Activated B cell treated with CpG ODN at 0.5 μM for 24 hours (primary cell): ENCODE measurements at regions of chr2 and their contacts with region 1.

Region 1: DNA sequence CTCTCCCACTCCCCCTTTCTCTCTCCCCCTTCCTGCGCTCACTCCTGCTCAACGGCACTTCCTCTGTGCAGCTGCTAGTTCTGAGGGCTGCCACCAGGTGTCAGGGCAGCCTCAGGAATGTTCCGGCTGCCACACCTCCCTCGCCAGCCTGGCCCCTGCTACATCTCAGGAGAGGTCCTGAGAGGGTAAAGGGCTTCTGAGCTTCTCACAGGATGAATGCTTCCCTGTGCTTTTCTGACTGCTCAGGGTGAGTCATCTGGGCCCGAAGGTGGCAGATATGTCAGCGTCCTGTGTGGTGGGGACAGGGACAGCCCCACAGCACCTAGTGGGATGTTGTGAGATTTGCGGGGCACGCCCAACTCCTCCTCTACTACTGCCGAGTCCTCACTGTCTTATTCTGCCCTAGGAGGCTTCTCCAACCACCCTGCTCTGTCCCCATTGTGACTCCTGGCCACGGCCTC is 49.0 kb downstream of the PLEKHB2 start:
- DNase-seq: peak; percentile 49
- ATAC-seq: peak; percentile 91
- H3K4me3 Mint-ChIP-seq: no peak overlapping the region
- H3K27ac Mint-ChIP-seq: no peak overlapping the region
- H3K4me1 Mint-ChIP-seq: peaks cover 21% of the 10 kb centered on the region
- H3K27me3 Mint-ChIP-seq: no peaks in the 10 kb centered on the region
- CTCF ChIP-seq: no peak

Region 2: GRCh38 chr2:131413148-131413747 is 259.1 kb after region 1 on chr2:
- CTCF ChIA-PET with region 1: no interaction called
- POLR2A ChIA-PET with region 1: no interaction called
- intact Hi-C with region 1: loop called (anchors 2 kb)
- DNase-seq: no peak
- ATAC-seq: peak; percentile 65
- H3K4me3 Mint-ChIP-seq: no peak overlapping the region
- H3K27ac Mint-ChIP-seq: no peak overlapping the region
- H3K4me1 Mint-ChIP-seq: no peaks in the 10 kb centered on the region
- H3K27me3 Mint-ChIP-seq: peaks cover 36% of the 10 kb centered on the region
- CTCF ChIP-seq: peak; percentile 57

Region 3: DNA sequence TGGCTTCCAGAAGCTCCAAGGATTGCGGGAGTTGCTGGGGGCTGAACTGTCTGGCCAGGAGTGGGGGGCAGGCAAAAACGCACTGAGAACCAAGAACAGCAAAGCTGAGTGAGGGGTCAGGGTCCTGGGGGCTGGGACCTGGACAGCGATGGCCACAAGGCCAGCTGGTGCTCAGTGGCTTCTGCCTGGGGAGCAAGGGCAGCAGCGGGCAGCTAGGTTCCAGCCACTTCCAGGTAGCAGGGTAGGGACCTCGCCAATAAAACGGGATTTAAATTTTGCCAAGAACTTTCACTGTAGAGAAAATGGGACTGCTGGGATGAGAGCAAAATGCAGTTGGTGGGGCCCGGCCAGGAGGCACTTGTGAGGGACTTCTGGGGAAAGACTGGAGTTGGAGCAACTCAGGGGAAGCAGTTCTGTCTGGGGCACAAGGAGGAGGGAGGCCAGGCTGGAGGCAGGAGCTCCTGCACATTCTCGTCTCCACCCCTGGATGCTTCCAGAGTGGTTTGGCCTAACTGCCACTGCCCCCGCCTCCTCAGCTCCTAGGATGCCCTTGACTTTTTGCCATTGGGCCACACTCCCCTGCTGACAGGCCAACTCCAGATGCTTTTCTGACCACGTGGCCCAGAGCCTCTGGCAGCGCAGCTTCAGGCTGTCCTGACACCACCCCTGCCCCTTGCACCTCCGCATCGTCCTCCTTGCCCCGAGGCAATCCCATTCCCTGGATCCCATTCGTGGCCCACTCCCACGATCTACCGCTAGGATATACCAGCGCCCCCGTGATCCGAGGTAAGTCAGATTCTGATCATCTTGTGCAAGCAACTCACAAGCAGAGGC is 368.1 kb after region 1 on chr2:
- CTCF ChIA-PET with region 1: no interaction called
- POLR2A ChIA-PET with region 1: no interaction called
- intact Hi-C with region 1: loop called (anchors 5 kb)
- DNase-seq: no peak
- ATAC-seq: no peak
- H3K4me3 Mint-ChIP-seq: no peak overlapping the region
- H3K27ac Mint-ChIP-seq: no peak overlapping the region
- H3K4me1 Mint-ChIP-seq: no peaks in the 10 kb centered on the region
- H3K27me3 Mint-ChIP-seq: no peaks in the 10 kb centered on the region
- CTCF ChIP-seq: no peak

Region 4: DNA sequence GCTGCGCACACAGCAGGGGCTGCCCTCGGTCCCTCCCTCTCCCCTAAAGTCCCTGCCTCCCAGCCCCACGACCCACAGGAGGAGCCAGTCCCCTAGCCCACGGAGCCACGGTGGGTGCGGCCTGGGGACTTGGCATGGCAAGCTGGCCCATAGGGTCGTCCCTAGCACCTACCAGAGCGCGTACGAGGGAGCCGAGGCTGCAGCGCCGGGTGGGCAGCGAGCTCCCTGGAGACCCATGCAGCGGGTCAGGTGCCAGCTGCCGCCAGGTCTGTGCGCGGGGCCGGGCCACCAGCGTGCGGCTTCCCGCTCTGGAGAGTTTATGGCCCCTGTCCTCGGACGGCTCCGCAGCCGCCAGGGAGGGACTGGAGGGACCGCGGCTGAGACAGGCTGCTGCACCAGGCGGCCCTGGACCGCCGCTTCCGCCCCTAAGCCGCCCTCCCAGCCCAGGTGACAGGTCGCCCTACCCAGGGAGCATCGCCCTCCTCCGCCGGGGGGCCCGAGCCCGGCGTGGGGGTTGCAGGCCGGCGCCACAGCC is 647.2 kb after region 1 on chr2:
- CTCF ChIA-PET with region 1: interaction called, 3 read pairs
- POLR2A ChIA-PET with region 1: no interaction called
- intact Hi-C with region 1: loop called (anchors 1 kb)
- DNase-seq: no peak
- ATAC-seq: no peak
- H3K4me3 Mint-ChIP-seq: no peak overlapping the region
- H3K27ac Mint-ChIP-seq: no peak overlapping the region
- H3K4me1 Mint-ChIP-seq: peaks cover 4% of the 10 kb centered on the region
- H3K27me3 Mint-ChIP-seq: peaks cover 3% of the 10 kb centered on the region
- CTCF ChIP-seq: no peak